Endothelial cell of umbilical vein (primary cell): ENCODE measurements at regions of chr18 and their contacts with region 1.

Region 1: GRCh38 chr18:62179213-62179612 is 7.6 kb downstream of the PIGN start:
- DNase-seq: no peak
- H3K4me3 ChIP-seq: no peak overlapping the region
- H3K27ac ChIP-seq: no peak overlapping the region
- H3K4me1 ChIP-seq: peaks cover 10% of the 10 kb centered on the region
- H3K27me3 ChIP-seq: no peaks in the 10 kb centered on the region
- CTCF ChIP-seq: no peak
- POLR2A ChIP-seq: no peak

Region 2: DNA sequence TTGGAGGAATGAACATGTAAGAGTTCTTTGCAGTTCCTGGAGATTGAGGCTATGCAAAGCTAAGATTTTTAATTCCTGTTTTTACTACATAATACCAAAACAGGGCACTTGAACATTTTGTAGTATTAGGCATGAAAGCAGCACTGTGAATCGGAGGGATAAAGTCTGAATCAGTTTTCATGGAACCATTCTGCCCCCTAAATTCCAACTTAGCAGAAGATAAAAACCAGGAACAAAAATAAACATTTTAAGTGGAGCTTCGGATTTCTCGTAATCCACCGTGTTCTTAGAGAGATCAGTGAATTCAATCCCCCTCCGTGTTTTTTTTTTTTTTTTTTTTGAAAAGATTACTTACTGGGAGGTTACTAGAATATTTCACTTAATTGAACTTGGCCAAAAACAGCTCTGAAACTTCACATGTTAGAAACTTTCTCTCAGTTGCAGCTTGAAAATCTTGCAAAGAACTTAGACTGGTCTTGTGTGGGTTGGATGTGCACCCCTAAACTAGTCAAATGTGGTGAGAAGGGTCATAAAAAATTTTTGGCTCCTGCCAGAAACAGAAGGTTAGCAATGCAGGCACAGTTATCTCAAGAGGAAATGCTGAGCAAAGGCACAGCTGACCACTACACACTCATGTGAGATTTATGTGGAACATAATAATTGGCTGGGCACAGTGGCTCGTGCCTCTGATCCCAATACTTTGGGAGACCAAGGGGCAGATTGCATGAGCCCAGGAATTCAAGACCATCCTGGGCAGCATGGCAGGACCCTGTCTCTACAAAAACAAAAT is 141.0 kb before region 1 on chr18:
- CTCF ChIA-PET with region 1: no interaction called
- POLR2A ChIA-PET with region 1: no interaction called
- dilution Hi-C with region 1: no loop called
- intact Hi-C with region 1: no loop called
- DNase-seq: peak; percentile 50
- H3K4me3 ChIP-seq: no peak overlapping the region
- H3K27ac ChIP-seq: no peak overlapping the region
- H3K4me1 ChIP-seq: peaks cover 5% of the 10 kb centered on the region
- H3K27me3 ChIP-seq: no peaks in the 10 kb centered on the region
- CTCF ChIP-seq: no peak
- POLR2A ChIP-seq: no peak

Region 3: DNA sequence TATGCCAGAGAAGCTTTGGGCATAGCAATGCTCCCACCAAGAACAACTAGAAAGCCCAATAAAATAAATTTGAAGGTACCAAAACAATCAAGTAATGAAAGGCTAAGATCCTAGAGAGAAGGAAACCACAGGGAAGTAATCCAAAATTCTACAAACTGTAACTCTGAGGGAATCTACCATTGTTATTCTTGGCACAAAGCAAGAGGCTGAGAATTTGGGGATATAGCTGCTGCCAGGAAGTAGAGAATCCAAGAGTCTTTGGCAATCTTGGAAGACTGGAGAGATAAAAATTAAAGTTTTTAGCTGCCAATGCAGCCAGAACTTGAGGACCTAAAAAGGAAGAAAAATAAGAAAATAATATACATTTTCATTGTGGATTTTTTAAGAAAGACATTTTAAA is 60.9 kb before region 1 on chr18:
- CTCF ChIA-PET with region 1: no interaction called
- POLR2A ChIA-PET with region 1: no interaction called
- dilution Hi-C with region 1: no loop called
- intact Hi-C with region 1: no loop called
- DNase-seq: peak; percentile 6
- H3K4me3 ChIP-seq: no peak overlapping the region
- H3K27ac ChIP-seq: no peak overlapping the region
- H3K4me1 ChIP-seq: peaks cover 7% of the 10 kb centered on the region
- H3K27me3 ChIP-seq: no peaks in the 10 kb centered on the region
- CTCF ChIP-seq: no peak
- POLR2A ChIP-seq: no peak

Region 4: DNA sequence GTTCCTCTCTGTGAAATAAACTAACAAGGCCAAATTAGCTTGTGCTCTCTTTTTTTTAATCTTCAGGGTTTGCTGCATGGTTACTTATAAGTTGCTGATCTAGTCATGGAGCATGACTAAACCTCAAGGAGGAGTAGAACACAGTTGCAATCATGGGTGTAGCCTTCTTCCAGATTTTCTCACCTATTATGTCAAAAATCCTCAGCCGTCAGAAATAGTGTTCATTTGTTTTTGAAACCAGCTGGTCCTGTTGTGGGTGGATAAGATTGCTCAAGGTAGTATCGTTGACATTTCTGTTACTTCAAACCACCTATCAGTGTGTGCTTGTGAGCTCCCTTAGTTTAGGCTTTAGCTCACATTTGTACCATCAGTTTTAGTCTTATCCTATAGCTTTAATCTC is 19.0 kb after region 1 on chr18:
- CTCF ChIA-PET with region 1: interaction called, 3 read pairs
- POLR2A ChIA-PET with region 1: no interaction called
- dilution Hi-C with region 1: no loop called
- intact Hi-C with region 1: loop called (anchors 1 kb)
- DNase-seq: no peak
- H3K4me3 ChIP-seq: no peak overlapping the region
- H3K27ac ChIP-seq: no peak overlapping the region
- H3K4me1 ChIP-seq: peaks cover 4% of the 10 kb centered on the region
- H3K27me3 ChIP-seq: no peaks in the 10 kb centered on the region
- CTCF ChIP-seq: no peak
- POLR2A ChIP-seq: no peak

Region 5: DNA sequence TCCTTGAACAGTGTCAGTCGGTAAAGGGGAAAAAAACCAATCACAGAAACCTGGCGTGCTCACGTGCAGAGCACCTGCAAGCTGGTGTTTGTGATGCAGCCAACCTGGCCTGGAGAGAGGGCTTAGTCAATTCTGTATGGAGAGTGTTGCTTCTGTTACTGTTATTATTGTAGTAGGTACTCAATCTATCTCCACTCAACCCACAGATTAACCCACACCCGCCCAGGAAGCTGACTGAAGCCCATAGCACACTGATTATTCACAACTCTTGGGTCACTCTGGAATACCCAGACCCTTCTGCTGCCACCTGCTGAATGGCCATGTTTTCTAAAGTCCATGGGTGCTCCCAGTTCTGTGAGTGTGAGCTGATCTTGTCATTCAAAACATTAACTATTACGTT is 199.8 kb after region 1 on chr18:
- CTCF ChIA-PET with region 1: no interaction called
- POLR2A ChIA-PET with region 1: no interaction called
- dilution Hi-C with region 1: no loop called
- intact Hi-C with region 1: no loop called
- DNase-seq: no peak
- H3K4me3 ChIP-seq: no peak overlapping the region
- H3K27ac ChIP-seq: no peak overlapping the region
- H3K4me1 ChIP-seq: no peaks in the 10 kb centered on the region
- H3K27me3 ChIP-seq: no peaks in the 10 kb centered on the region
- CTCF ChIP-seq: no peak
- POLR2A ChIP-seq: no peak

Region 6: GRCh38 chr18:62399781-62400308 is 220.6 kb after region 1 on chr18:
- CTCF ChIA-PET with region 1: no interaction called
- POLR2A ChIA-PET with region 1: no interaction called
- dilution Hi-C with region 1: loop called (anchors 10 kb)
- intact Hi-C with region 1: loop called (anchors 5 kb)
- DNase-seq: peak; percentile 46
- H3K4me3 ChIP-seq: no peak overlapping the region
- H3K27ac ChIP-seq: no peak overlapping the region
- H3K4me1 ChIP-seq: peaks cover 4% of the 10 kb centered on the region
- H3K27me3 ChIP-seq: no peaks in the 10 kb centered on the region
- CTCF ChIP-seq: peak; percentile 46 to 52
- POLR2A ChIP-seq: no peak

Region 7: DNA sequence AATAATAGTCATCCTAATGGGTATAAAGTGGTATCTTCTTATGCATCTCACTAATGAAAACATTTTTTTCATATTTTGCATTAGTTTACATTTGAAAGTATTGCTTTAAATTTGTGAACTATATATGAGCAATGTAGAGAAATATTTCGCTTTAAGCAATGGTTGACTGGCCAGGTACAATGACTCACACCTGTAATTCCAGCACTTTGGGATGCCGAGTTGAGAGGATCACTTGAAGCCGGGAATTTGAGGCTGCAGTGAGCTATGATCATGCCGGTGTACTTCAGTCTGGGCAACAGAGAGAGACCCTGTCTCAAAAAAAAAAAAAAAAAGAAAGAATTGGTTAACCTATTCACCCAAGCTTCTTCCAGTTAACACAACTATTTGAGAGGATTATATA is 358.7 kb after region 1 on chr18:
- CTCF ChIA-PET with region 1: no interaction called
- POLR2A ChIA-PET with region 1: no interaction called
- dilution Hi-C with region 1: no loop called
- intact Hi-C with region 1: no loop called
- DNase-seq: no peak
- H3K4me3 ChIP-seq: no peak overlapping the region
- H3K27ac ChIP-seq: no peak overlapping the region
- H3K4me1 ChIP-seq: no peaks in the 10 kb centered on the region
- H3K27me3 ChIP-seq: no peaks in the 10 kb centered on the region
- CTCF ChIP-seq: no peak
- POLR2A ChIP-seq: no peak